Dendritic cell treated with granulocyte-macrophage colony-stimulating factor and Interleukin-4, amounts not matched to agents 40 ng/mL and 50 ng/mL, for 4 days (primary cell): ENCODE measurements at regions of chr1 and their contacts with region 1.

Region 1: DNA sequence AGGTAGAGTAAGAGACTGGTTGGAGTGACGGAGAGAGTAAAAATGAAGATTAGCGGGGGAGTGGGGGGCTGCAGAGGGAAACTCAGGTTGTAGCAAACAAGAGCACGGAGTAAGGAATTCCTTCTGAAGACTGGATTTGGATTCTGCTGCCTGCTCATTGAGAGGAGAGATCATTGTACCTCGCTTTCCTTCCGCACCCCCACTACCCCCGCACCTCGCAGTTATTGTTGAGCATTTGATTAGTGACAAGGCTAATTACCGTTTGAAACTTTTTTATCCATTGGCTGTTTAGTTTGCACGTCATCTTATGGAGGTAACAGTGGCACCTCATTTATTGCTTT is 463 bp downstream of the PRPF3 start:
- H3K4me3 Mint-ChIP-seq: peak overlapping the region; percentile 97
- H3K27ac Mint-ChIP-seq: peak overlapping the region; percentile 94
- H3K4me1 Mint-ChIP-seq: peaks cover 21% of the 10 kb centered on the region
- H3K27me3 Mint-ChIP-seq: no peaks in the 10 kb centered on the region

Region 2: DNA sequence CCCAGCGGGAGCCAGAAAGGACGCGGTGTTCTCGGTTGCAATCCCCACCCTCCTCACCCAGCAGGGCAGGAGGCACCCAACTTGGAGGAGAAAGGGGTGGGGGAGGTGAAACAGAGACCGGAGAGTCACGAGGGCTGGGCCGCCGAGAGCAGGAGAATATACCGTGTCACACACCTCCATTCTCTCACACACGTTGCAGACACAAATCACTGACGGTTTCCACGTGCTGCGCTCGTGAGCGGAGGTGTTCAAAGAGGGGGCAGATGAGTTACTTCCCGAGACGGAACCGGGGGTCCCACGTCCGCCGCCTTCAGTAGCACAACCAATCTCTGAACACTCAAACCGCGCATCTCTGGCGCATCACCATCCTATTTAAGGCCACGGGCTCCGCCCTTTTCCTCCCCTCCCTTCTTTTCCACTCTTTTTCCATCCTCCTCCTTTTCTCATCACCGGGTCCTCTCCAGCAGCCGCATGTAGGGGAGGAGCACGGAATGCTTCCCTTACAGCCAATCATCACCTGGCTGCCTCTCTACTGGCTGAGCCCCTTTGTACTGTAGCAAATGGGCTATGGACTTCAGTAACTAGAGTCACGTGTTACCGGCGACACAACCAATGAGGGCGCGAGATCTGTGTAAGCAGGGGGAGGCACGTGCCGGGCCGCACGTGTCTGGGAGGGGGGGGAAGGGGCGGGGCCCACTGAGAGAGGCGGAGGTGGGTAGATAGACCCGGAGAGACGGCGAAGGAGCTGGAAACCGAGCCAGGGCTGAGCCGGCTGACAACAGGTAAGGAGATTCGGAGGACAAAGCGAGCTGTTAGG is 39.8 kb before region 1 on chr1 and contains the start of gene CIART:
- intact Hi-C with region 1: loop called (anchors 5 kb)
- H3K4me3 Mint-ChIP-seq: peak within 1 kb of the TSS; percentile 71
- H3K27ac Mint-ChIP-seq: peak within 1 kb of the TSS; percentile 61
- H3K4me1 Mint-ChIP-seq: peaks cover 40% of the 10 kb centered on the region
- H3K27me3 Mint-ChIP-seq: peaks cover 59% of the 10 kb centered on the region

Region 3: GRCh38 chr1:150387200-150387599 is 65.4 kb after region 1 on chr1:
- intact Hi-C with region 1: no loop called
- H3K4me3 Mint-ChIP-seq: no peak overlapping the region
- H3K27ac Mint-ChIP-seq: no peak overlapping the region
- H3K4me1 Mint-ChIP-seq: peaks cover 36% of the 10 kb centered on the region
- H3K27me3 Mint-ChIP-seq: no peaks in the 10 kb centered on the region

Region 4: DNA sequence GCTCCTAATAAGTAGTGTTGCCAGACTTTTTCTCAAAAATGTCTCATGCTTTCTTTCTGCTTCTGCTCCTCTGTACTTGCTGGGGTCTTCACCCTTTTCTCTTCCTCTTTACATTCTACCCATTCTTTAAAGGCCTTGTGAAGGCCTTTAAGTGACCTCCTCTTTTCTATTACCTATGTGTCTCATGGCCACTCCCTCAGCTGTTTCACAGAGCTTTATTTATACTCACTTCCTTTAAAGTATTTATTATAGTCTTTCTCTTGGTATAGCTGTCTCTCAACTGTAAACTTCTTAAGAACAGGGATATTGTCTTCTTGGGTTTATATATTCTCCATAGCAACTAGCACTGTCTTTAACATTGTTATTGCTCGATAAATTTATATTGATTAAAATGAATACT is 374.4 kb after region 1 on chr1:
- intact Hi-C with region 1: no loop called
- H3K4me3 Mint-ChIP-seq: peak overlapping the region; percentile 50
- H3K27ac Mint-ChIP-seq: peak overlapping the region; percentile 22
- H3K4me1 Mint-ChIP-seq: peaks cover 24% of the 10 kb centered on the region
- H3K27me3 Mint-ChIP-seq: no peaks in the 10 kb centered on the region